ENCODE measurements at regions of chr1 and their contacts with region 1.

Region 1: DNA sequence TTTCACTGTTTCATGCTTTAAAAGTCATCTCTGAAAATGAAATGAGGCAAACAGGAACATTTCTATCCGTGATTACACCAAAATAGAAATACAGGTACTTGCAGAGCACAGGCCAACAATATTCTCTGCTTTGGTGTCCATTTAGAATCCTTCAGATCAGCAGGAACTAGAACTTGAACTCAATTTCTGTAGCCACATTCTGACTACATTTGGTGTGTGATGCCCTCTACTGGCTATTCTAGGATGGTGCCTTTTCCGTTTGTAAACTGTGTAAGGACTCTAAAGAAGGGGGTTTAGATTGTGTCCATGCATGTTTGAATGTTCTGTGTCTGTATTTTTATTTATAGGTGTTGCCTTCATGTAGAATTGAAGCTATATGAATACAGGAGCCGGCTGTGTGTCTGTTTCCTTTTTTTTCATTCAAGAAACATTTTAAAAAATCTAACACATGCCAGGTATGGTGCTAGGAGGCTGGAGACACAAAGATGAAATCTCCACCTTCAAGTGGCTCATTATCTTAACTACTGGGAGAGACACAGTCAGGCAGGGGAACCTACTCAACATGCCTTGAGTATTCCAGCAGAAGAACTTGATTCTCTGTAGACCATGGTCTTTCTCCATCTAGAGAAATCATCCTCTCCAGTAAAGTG is 7.6 kb upstream of the ZNF326 start:
- DNase-seq: peak; percentile 71
- ATAC-seq: peak; percentile 90
- H3K4me3 ChIP-seq: no peak overlapping the region
- H3K27ac ChIP-seq: no peak overlapping the region
- H3K4me1 ChIP-seq: peaks cover 0 to 24% of the 10 kb centered on the region in 2 experiments; a peak in 3 of 4 replicates
- H3K27me3 ChIP-seq: no peaks in the 10 kb centered on the region
- CTCF ChIP-seq: peak; percentile 83 to 89 (median 85)
- POLR2A ChIP-seq: no peak
- RAD21 ChIP-seq: peak; percentile 95

Region 2: GRCh38 chr1:89483010-89483756 is 504.1 kb before region 1 on chr1:
- CTCF ChIA-PET with region 1: no interaction called
- POLR2A ChIA-PET with region 1: no interaction called
- RAD21 ChIA-PET with region 1: no interaction called
- intact Hi-C with region 1: loop called (anchors 5 kb)
- DNase-seq: peak; percentile 78
- ATAC-seq: peak; percentile 97
- H3K4me3 ChIP-seq: no peak overlapping the region
- H3K27ac ChIP-seq: no peak overlapping the region
- H3K4me1 ChIP-seq: no peaks in the 10 kb centered on the region
- H3K27me3 ChIP-seq: no peaks in the 10 kb centered on the region
- CTCF ChIP-seq: peak; percentile 61 to 83 (median 81)
- POLR2A ChIP-seq: no peak
- RAD21 ChIP-seq: peak; percentile 82

Region 3: DNA sequence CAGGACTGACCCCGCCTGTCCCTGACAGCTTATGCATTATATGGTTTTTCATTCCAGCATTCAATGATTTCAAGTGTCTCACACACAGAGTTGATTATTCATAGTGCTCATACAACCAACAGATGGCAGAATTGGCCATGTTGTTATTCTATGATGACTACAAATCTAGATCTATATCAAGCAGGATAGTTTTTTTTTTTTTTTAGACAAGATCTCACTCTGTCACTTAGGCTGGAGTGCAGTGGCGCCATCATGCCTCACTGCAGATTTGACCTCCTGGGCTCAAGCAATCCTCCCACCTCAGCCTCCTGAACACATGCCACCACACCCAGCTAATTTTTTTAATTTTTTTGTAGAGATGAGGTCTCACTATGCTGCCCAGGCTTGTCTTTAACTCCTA is 206.6 kb before region 1 on chr1:
- CTCF ChIA-PET with region 1: interaction called, 4 read pairs
- POLR2A ChIA-PET with region 1: no interaction called
- RAD21 ChIA-PET with region 1: interaction called in 1 of 2 experiments, 3 read pairs
- intact Hi-C with region 1: loop called (anchors 1 kb)
- DNase-seq: peak; percentile 39
- ATAC-seq: peak; percentile 92
- H3K4me3 ChIP-seq: no peak overlapping the region
- H3K27ac ChIP-seq: no peak overlapping the region
- H3K4me1 ChIP-seq: no peaks in the 10 kb centered on the region; a peak in 1 of 4 replicates
- H3K27me3 ChIP-seq: no peaks in the 10 kb centered on the region
- CTCF ChIP-seq: peak; percentile 29 to 61 (median 54); a peak in 5 of 6 replicates
- POLR2A ChIP-seq: no peak
- RAD21 ChIP-seq: peak; percentile 77

Region 4: GRCh38 chr1:89804642-89805237 is 182.6 kb before region 1 on chr1:
- CTCF ChIA-PET with region 1: interaction called, 9 read pairs
- POLR2A ChIA-PET with region 1: no interaction called
- RAD21 ChIA-PET with region 1: no interaction called
- intact Hi-C with region 1: loop called (anchors 1 kb)
- DNase-seq: peak; percentile 65
- ATAC-seq: peak; percentile 96
- H3K4me3 ChIP-seq: no peak overlapping the region
- H3K27ac ChIP-seq: no peak overlapping the region
- H3K4me1 ChIP-seq: peaks cover 0 to 4% of the 10 kb centered on the region in 2 experiments; a peak in 1 of 4 replicates
- H3K27me3 ChIP-seq: no peaks in the 10 kb centered on the region
- CTCF ChIP-seq: peak; percentile 88 to 96 (median 89)
- POLR2A ChIP-seq: no peak
- RAD21 ChIP-seq: peak; percentile 96

Region 5: DNA sequence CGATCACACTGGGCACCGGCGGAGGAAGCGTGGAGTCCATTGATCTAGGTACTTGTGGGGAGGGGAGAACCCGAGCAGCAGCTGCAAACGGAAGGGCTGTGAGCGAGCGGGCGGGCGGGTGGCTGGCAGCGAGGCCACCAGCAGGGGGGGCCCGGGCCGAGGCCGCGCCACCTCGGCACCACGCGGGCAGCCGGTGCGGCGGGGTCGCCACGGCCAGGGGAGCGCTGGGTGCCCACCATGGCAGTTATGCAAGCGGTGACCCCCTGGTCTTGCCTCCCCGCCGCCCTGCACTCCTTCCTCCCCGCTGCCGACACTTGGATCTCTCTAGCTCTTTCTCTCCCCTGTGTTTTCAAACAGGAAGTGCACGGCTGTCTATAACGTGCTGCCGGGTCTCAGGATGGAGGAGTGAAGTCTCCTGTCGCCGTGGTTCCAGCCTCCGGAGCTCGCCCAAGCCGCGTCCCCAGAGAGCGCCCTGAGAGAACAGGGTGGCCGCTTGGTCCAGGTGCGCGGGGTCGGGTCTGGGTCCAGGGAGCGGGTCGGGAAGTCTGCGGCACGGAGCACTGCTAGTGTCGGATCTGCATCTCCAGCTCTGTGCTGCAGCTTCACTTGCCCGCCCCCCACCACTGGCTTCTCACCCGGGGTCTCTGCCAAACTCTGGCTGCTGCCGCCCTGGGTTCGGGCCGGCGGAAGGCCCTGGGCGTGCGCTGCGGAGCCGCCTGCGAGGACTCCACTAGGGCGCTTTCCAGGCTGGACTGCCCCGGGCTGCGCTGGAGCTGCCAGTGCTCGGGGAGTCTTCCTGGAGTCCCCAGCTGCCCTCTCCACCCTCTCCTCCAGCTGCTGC is 143.8 kb before region 1 on chr1:
- CTCF ChIA-PET with region 1: interaction called, 3 read pairs
- POLR2A ChIA-PET with region 1: no interaction called
- RAD21 ChIA-PET with region 1: no interaction called
- intact Hi-C with region 1: loop called (anchors 2 kb)
- DNase-seq: no peak
- ATAC-seq: peak; percentile 93
- H3K4me3 ChIP-seq: peak overlapping the region; percentile 74 to 87
- H3K27ac ChIP-seq: peak overlapping the region; percentile 61
- H3K4me1 ChIP-seq: peaks cover 11 to 18% of the 10 kb centered on the region in 2 experiments; a peak in 3 of 4 replicates
- H3K27me3 ChIP-seq: no peaks in the 10 kb centered on the region
- CTCF ChIP-seq: peak in 2 of 3 experiments; percentile 44 to 55; a peak in 4 of 6 replicates
- POLR2A ChIP-seq: peak; percentile 21
- RAD21 ChIP-seq: peak; percentile 28; the same call in 1 of the 2 replicates

Region 6: DNA sequence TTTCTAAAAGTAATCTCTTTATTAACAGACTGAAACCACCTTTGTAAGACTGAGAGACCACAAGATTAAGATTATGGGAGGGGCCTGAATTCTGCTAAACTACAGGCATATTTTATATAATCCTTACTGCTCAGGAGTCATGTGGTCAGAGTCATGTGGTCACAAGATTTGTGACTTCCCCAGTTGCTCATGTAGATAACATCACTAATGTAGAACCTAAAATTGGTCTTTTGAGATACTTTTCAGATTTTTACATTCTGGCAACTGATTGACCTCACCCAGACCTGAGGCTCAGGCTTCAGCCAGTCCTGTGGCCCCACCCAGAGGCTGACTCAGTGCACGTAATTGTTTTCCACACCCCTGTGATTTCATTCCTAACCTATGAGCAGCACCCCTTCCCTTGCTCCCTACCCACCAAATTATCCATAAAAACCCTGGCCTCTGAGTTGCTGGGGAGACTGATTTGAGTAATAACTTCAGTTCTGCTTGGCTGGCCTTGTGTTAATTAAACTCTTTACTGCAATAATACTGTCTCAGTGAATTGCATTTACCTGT is 34.1 kb before region 1 on chr1:
- CTCF ChIA-PET with region 1: no interaction called
- POLR2A ChIA-PET with region 1: no interaction called
- RAD21 ChIA-PET with region 1: no interaction called
- intact Hi-C with region 1: no loop called
- DNase-seq: peak; percentile 81
- ATAC-seq: peak; percentile 100
- H3K4me3 ChIP-seq: peak overlapping the region in 1 of 2 experiments; percentile 29; a peak in 1 of 4 replicates
- H3K27ac ChIP-seq: no peak overlapping the region
- H3K4me1 ChIP-seq: peaks cover 7 to 25% of the 10 kb centered on the region in 2 experiments
- H3K27me3 ChIP-seq: no peaks in the 10 kb centered on the region
- CTCF ChIP-seq: peak in 1 of 3 experiments; percentile 15; a peak in 1 of 6 replicates
- POLR2A ChIP-seq: no peak
- RAD21 ChIP-seq: peak; percentile 61

Region 7: GRCh38 chr1:90201467-90202358 is 214.4 kb after region 1 on chr1:
- CTCF ChIA-PET with region 1: no interaction called
- POLR2A ChIA-PET with region 1: no interaction called
- RAD21 ChIA-PET with region 1: no interaction called
- intact Hi-C with region 1: no loop called
- DNase-seq: no peak
- ATAC-seq: no peak
- H3K4me3 ChIP-seq: no peak overlapping the region
- H3K27ac ChIP-seq: no peak overlapping the region
- H3K4me1 ChIP-seq: no peaks in the 10 kb centered on the region
- H3K27me3 ChIP-seq: peaks cover 30% of the 10 kb centered on the region
- CTCF ChIP-seq: no peak
- POLR2A ChIP-seq: no peak
- RAD21 ChIP-seq: no peak

Region 8: GRCh38 chr1:90325168-90325567 is 337.9 kb after region 1 on chr1:
- CTCF ChIA-PET with region 1: no interaction called
- POLR2A ChIA-PET with region 1: no interaction called
- RAD21 ChIA-PET with region 1: no interaction called
- intact Hi-C with region 1: no loop called
- DNase-seq: no peak
- ATAC-seq: no peak
- H3K4me3 ChIP-seq: no peak overlapping the region
- H3K27ac ChIP-seq: no peak overlapping the region
- H3K4me1 ChIP-seq: no peaks in the 10 kb centered on the region
- H3K27me3 ChIP-seq: peaks cover 23% of the 10 kb centered on the region
- CTCF ChIP-seq: no peak
- POLR2A ChIP-seq: no peak
- RAD21 ChIP-seq: no peak

Measured in HCT116 (cell line).